Heart left ventricle (tissue), 16 donors: ENCODE measurements at regions of chr4 and their contacts with region 1.

Region 1: GRCh38 chr4:38179690-38180377 is 219.6 kb downstream of the PTTG2 start:
- DNase-seq: peak; percentile 54 to 78 (median 68)
- ATAC-seq: peak in 3 of 4 donors; percentile 31 to 68 (median 68)
- H3K4me3 ChIP-seq: no peak overlapping the region
- H3K27ac ChIP-seq: no peak overlapping the region
- H3K4me1 ChIP-seq: peaks cover 0 to 60% (median 19%) of the 10 kb centered on the region in 12 donors
- H3K27me3 ChIP-seq: no peaks in the 10 kb centered on the region
- CTCF ChIP-seq: peak; percentile 89 to 96 (median 92)
- POLR2A ChIP-seq: no peak

Region 2: GRCh38 chr4:38099908-38100407 is 79.9 kb before region 1 on chr4:
- intact Hi-C with region 1: no loop called
- DNase-seq: no peak
- ATAC-seq: peak in 2 of 4 donors; percentile 7 to 50
- H3K4me3 ChIP-seq: no peak overlapping the region
- H3K27ac ChIP-seq: peak overlapping the region in 5 of 12 donors; percentile 14 to 50 (median 32)
- H3K4me1 ChIP-seq: peaks cover 0 to 18% (median 0%) of the 10 kb centered on the region in 12 donors
- H3K27me3 ChIP-seq: no peaks in the 10 kb centered on the region
- CTCF ChIP-seq: no peak
- POLR2A ChIP-seq: no peak

Region 3: DNA sequence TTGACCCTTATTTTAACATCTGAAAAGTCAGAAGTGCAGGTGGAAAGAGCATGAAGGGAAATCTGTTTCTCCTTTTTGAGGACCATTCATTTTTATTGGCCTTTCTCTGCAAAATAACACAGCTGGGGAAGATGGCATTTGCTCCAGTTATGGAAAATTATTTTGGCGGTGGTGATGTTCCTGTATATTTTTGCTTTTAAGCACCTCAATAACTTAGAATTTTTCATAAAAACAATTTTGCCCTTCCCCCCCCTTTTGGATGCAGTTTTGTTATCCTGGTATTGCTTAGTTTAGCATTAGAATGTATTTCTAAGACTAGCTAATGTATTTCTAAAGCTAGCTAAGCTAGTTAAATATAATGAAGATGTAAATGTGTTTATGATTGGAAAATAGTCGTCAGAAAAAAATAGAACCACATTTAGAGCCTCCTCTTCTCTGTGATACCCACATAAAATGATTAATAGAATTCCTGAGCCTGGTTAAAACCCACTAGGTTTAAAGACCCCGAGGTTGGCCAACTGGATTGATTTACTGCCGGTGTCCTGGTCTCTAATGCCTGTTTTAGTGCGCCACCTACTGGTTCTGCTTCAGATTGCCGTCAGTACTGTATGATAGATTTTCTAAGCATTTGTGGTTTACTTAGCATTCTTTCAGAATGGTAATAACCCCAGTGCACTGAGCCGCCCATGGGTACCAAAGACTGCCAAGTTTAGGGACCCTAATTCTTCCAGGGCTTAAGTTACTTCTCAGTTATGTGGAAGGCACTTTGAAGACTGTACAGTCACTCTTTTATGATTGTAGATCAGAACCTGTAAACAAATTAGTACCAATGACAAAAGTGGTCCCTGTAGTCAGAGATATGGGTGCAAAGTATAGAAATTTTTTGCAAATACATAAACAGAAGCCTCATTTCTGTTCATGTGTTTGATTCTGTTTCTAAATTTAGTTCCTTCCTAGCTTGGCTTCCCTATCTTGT is 495.6 kb after region 1 on chr4:
- intact Hi-C with region 1: loop called (anchors 1 to 5 kb)
- DNase-seq: peak in 4 of 5 donors; percentile 68 to 78 (median 76)
- ATAC-seq: peak in 3 of 4 donors; percentile 40 to 45 (median 42)
- H3K4me3 ChIP-seq: peak overlapping the region in 4 of 12 donors; percentile 2 to 42 (median 18)
- H3K27ac ChIP-seq: peak overlapping the region in 10 of 12 donors; percentile 97 to 100 (median 99)
- H3K4me1 ChIP-seq: peaks cover 30 to 91% (median 81%) of the 10 kb centered on the region in 12 donors
- H3K27me3 ChIP-seq: no peaks in the 10 kb centered on the region
- CTCF ChIP-seq: peak; percentile 84 to 97 (median 92)
- POLR2A ChIP-seq: no peak

Region 4: GRCh38 chr4:38730830-38731646 is 551.2 kb after region 1 on chr4:
- intact Hi-C with region 1: loop called (anchors 1 to 2 kb)
- DNase-seq: peak; percentile 76 to 90 (median 79)
- ATAC-seq: peak; percentile 78 to 91 (median 89)
- H3K4me3 ChIP-seq: no peak overlapping the region
- H3K27ac ChIP-seq: no peak overlapping the region
- H3K4me1 ChIP-seq: peaks cover 0 to 21% (median 4%) of the 10 kb centered on the region in 12 donors
- H3K27me3 ChIP-seq: no peaks in the 10 kb centered on the region
- CTCF ChIP-seq: peak; percentile 88 to 98 (median 96)
- POLR2A ChIP-seq: no peak

Region 5: DNA sequence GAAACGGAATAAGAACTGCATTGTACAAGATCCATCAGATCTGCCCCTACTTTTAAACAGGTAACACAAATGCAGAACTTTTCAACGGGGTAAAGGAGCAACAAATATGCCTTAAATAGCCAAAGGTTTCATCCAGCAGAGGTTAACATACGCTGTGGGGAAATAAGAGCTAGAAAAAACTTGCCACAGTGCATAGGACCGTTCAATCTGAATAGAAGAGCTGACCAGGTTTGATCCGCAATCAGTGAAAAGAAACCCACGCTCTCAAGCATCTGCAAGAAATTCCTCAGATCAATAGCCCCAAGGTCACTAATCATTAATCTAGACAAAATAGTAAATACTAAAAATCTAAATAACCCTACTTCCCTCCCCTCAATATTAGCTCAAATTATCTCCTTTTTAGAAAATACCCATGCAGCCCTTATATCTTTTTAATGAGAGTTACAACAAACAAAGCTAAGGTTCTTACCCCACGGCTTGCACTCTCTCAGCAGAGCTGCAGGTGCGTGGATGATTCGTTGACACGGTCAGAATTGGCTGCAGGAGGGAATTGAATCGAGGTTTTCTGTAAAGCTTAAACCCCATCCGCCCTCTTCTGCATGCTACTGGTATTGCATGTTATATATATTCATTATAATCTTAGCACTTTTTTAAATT is 602.7 kb after region 1 on chr4 and contains the start of gene TLR10:
- intact Hi-C with region 1: loop called in 4 of 10 experiments (anchors 2 to 5 kb)
- DNase-seq: peak in 2 of 5 donors; percentile 33 to 40
- ATAC-seq: peak in 3 of 4 donors; percentile 59 to 78 (median 71)
- H3K4me3 ChIP-seq: no peak within 1 kb of the TSS
- H3K27ac ChIP-seq: no peak within 1 kb of the TSS
- H3K4me1 ChIP-seq: peaks cover 0 to 16% (median 0%) of the 10 kb centered on the region in 12 donors
- H3K27me3 ChIP-seq: no peaks in the 10 kb centered on the region
- CTCF ChIP-seq: peak; percentile 65 to 83 (median 72)
- POLR2A ChIP-seq: no peak
- total RNA-seq, gene TLR10: 0.18 to 0.24 TPM in 2 of 9 donors, not detected in the others

Region 6: GRCh38 chr4:38856524-38857337 is 676.9 kb after region 1 on chr4 and contains the start of gene TLR6:
- intact Hi-C with region 1: loop called in 1 of 10 experiments (anchors 10 kb)
- DNase-seq: peak in 2 of 5 donors; percentile 33 to 39
- ATAC-seq: peak in 2 of 4 donors; percentile 40 to 47
- H3K4me3 ChIP-seq: peak within 1 kb of the TSS in 9 of 12 donors; percentile 12 to 57 (median 29)
- H3K27ac ChIP-seq: peak within 1 kb of the TSS; percentile 1 to 92 (median 56)
- H3K4me1 ChIP-seq: peaks cover 0 to 45% (median 0%) of the 10 kb centered on the region in 12 donors
- H3K27me3 ChIP-seq: no peaks in the 10 kb centered on the region
- CTCF ChIP-seq: peak; percentile 58 to 92 (median 74)
- POLR2A ChIP-seq: no peak
- total RNA-seq, gene TLR6: 0.83 to 9.8 (median 1.2) TPM